Activated CD4-positive, alpha-beta memory T cell treated with anti-CD3 and anti-CD28 coated beads, Interleukin-2, amount 10 ng/mL, durations not matched to agents 7 days and 5 days (primary cell): ENCODE measurements at regions of chr16 and their contacts with region 1.

Region 1: DNA sequence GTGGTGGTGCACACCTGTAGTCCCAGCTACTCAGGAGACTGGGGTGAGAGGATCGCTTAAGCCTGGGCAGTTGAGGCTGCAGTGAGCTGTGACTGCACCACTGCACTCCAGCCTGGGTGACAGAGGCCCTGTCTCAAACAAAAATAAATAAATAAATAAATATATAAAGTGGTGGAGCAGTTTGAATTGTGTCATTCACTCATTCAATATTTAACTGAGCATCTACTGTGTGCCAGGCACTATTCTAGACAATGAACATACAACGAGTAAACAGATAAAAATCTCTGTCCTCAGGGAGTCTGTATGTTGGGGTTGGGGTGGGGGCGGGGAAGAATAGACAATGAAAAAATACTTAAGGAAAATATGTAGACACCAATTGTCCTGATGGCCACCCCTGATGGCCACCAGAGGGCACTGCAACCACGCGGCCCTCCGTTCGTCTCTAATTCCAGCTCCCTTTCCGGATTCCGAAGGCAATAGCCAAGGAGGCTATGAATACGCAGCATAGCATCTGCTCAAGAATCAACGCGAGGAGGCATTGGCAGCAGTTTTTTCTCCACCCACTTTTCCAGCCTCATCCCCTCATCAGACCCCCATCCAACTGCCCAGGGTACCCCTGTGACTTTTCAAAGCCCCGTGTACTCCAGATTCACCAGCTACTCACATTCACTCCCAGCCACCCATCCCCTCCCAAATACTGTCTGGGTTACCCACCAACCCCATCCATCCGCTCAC is 21.4 kb downstream of the QPRT start:
- DNase-seq: peak; percentile 85
- H3K4me3 Mint-ChIP-seq: peak overlapping the region; percentile 22
- H3K27ac Mint-ChIP-seq: peak overlapping the region; percentile 70
- H3K4me1 Mint-ChIP-seq: peaks cover 41% of the 10 kb centered on the region
- H3K27me3 Mint-ChIP-seq: no peaks in the 10 kb centered on the region

Region 2: GRCh38 chr16:29710227-29711219 is 10.1 kb after region 1 on chr16:
- CTCF ChIA-PET with region 1: interaction called, 42 read pairs
- POLR2A ChIA-PET with region 1: interaction called, 7 read pairs
- DNase-seq: peak; percentile 34
- H3K4me3 Mint-ChIP-seq: no peak overlapping the region
- H3K27ac Mint-ChIP-seq: no peak overlapping the region
- H3K4me1 Mint-ChIP-seq: peaks cover 16% of the 10 kb centered on the region
- H3K27me3 Mint-ChIP-seq: peaks cover 8% of the 10 kb centered on the region

Region 3: DNA sequence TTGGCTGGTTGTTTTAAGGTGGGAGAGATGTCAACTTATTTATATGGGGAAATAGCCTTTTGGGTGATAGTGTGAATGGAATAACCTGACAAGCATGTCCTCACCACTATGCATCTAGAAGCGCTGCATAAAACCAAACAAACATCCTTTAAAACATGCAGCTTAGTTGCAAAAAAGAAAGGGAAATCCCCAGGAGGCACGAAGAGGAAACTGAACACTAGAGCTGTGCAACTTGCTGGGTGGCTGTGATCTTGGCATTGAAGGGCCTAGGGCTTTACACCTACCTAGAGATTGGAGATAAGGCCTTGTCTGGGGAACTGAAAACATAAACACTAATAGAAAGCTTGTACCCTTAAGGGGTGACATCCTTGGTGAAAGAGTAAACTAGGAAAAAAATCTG is 38.1 kb after region 1 on chr16:
- CTCF ChIA-PET with region 1: interaction called, 12 read pairs
- POLR2A ChIA-PET with region 1: interaction called, 9 read pairs
- DNase-seq: peak; percentile 56
- H3K4me3 Mint-ChIP-seq: no peak overlapping the region
- H3K27ac Mint-ChIP-seq: peak overlapping the region; percentile 74
- H3K4me1 Mint-ChIP-seq: peaks cover 68% of the 10 kb centered on the region
- H3K27me3 Mint-ChIP-seq: no peaks in the 10 kb centered on the region

Region 4: DNA sequence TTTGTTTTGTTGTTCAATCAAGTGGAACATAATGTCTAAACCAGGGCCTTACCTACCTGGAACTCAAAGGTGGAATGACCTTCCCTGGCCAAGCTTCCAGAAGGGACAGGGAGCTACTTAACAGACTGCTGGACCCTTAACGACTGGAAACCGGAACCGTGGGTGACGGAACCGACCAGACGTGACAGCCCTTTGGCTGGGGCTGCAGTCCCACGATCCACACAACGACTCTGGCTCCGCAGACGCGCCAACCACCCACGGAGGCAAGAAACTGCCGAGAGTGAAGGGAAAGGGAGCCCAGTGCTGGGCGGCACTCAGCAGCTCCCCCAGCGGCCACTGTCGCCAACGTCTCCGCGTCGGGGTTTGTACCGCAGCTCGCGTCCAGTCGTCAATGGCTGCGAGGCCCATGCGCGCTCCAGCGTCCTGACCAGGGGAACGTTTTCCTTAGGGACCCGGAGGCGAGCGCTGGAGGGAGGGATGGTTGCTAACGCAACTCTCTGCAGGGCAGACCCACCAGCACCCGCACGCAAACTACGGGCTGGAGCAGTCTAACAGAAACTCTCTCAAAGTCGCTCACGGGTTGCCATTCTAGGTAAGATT is 84.6 kb after region 1 on chr16:
- CTCF ChIA-PET with region 1: interaction called, 68 read pairs
- POLR2A ChIA-PET with region 1: interaction called, 69 read pairs
- DNase-seq: peak; percentile 81
- H3K4me3 Mint-ChIP-seq: peak overlapping the region; percentile 29
- H3K27ac Mint-ChIP-seq: no peak overlapping the region
- H3K4me1 Mint-ChIP-seq: peaks cover 32% of the 10 kb centered on the region
- H3K27me3 Mint-ChIP-seq: peaks cover 14% of the 10 kb centered on the region

Region 5: GRCh38 chr16:29815793-29816693 is 115.6 kb after region 1 on chr16 and contains the start of gene PAGR1:
- CTCF ChIA-PET with region 1: interaction called, 57 read pairs
- POLR2A ChIA-PET with region 1: interaction called, 48 read pairs
- DNase-seq: peak; percentile 99
- H3K4me3 Mint-ChIP-seq: peak within 1 kb of the TSS; percentile 94
- H3K27ac Mint-ChIP-seq: peak within 1 kb of the TSS; percentile 94
- H3K4me1 Mint-ChIP-seq: peaks cover 72% of the 10 kb centered on the region
- H3K27me3 Mint-ChIP-seq: peaks cover 11% of the 10 kb centered on the region
- total RNA-seq, gene PAGR1: 26.6 to 28.4 TPM

Region 6: DNA sequence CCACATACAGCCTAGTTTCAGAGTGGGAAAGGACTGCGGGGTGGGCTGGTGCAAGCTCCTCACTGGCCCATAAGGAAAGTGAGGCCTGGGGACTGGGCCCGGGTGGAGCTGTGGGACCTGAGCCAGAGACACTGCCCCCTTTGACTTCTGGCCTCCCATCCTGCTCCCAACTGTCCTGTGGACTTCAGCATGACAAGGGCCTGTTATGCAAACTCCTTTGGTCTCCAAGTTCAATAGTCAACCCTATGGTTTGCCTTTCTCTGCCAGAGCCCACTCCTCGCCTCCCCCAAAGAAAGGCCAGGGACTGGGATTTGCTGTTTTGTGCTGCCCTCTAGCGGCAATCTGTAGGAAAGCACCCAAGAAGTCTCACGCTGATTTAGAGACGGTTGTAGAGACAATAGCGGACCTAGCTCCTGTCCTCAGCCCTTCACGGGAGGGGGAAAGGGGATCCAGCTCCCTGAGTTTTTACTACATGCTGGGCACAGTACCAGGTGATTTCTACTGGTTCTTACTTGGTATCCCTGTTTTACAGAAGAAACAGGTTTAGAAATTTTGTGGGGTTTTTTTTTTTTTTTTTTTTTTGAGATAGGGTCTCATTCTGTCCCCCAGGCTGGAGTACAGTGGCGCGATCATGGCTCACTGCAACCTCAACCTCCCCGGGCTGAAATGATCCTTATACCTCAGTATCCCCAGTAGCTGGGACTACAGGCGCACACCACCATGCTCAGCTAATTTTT is 331.8 kb after region 1 on chr16:
- CTCF ChIA-PET with region 1: interaction called, 33 read pairs
- POLR2A ChIA-PET with region 1: interaction called, 3 read pairs
- DNase-seq: peak; percentile 72
- H3K4me3 Mint-ChIP-seq: no peak overlapping the region
- H3K27ac Mint-ChIP-seq: no peak overlapping the region
- H3K4me1 Mint-ChIP-seq: peaks cover 25% of the 10 kb centered on the region
- H3K27me3 Mint-ChIP-seq: peaks cover 45% of the 10 kb centered on the region